Activated T-helper 1 cell treated with anti-CD3 and anti-CD28 coated beads, Interleukin-12 subunit alpha, Interleukin-12 subunit beta, Interleukin-2, Interleukin-4 antibody, amounts not matched to agents 30 ng/mL and 10 ng/mL and 1 ng/mL, durations not matched to agents 14 hours and 24 hours and 36 hours (primary cell): ENCODE measurements at regions of chr19 and their contacts with region 1.

Region 1: DNA sequence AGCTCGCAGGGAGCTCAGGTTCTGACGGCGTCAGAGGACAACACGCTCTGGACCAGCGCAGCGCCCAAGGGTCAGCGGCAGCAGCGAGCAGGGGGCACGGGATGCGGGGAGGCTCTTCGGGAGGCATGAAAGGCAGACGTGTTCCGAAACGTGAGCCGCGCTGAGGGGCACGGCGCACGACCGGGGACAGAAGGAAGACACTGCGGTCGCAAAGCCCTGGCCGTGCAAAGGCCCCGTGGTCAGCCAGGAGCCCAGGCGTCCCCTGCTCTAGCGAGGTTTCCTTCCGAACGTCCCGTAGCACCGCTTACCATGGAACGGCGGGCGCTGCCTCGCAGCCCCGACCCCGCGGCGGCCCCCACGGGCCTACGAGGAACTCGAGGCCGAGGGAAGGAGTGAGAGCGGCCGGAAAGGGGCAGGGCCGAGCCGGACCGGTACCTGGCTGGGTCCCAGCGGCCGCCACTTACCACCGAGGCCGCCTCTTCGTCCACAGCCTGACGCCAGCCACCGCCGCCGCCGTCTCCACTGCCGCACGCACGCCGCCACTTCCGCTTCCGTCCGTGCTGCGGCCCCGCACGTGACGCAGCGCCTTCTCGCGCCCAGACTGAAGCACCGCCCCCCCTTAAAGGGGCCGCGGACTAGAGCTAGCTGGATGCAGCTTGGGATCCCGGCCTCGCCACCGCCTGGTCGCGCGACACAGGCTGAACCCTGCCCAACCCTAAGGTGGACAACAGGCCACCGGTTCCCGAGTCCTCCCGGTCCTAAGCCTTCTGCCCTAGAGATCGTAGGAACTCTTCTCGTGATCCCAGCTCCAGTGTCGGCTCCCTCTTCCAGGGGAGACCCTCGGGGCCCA is 9.4 kb downstream of the ABHD17A start:
- DNase-seq: peak; percentile 87
- H3K4me3 Mint-ChIP-seq: peak overlapping the region; percentile 98
- H3K27ac Mint-ChIP-seq: peak overlapping the region; percentile 96
- H3K4me1 Mint-ChIP-seq: peaks cover 20% of the 10 kb centered on the region
- H3K27me3 Mint-ChIP-seq: peaks cover 2% of the 10 kb centered on the region

Region 2: DNA sequence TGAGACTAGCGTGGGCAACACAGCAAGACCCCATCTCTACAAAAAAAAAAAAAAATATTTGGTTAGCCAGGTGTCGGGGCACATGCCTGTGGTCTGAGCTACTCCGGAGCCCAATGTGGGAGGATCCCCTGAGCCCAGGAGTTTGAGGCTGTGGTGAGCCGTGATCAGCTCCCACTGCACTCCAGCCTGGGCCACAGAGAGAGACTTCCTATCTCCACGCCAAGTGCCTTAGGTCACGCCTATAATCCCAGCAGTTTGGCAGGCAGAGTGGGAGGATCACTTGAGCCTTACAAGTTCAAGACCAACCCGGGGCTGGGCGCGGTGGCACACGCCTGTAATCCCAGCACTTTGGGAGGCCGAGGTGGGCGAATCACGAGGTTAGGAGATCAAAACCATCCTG is 20.6 kb after region 1 on chr19:
- intact Hi-C with region 1: loop called (anchors 1 kb)
- DNase-seq: no peak
- H3K4me3 Mint-ChIP-seq: peak overlapping the region; percentile 51
- H3K27ac Mint-ChIP-seq: peak overlapping the region; percentile 68
- H3K4me1 Mint-ChIP-seq: peaks cover 17% of the 10 kb centered on the region
- H3K27me3 Mint-ChIP-seq: peaks cover 1% of the 10 kb centered on the region